Activated T-helper 1 cell treated with anti-CD3 and anti-CD28 coated beads, Interleukin-12 subunit alpha, Interleukin-12 subunit beta, Interleukin-2, Interleukin-4 antibody, amounts not matched to agents 30 ng/mL and 10 ng/mL and 1 ng/mL, durations not matched to agents 14 hours and 24 hours and 36 hours (primary cell): ENCODE measurements at regions of chr1 and their contacts with region 1.

Region 1: DNA sequence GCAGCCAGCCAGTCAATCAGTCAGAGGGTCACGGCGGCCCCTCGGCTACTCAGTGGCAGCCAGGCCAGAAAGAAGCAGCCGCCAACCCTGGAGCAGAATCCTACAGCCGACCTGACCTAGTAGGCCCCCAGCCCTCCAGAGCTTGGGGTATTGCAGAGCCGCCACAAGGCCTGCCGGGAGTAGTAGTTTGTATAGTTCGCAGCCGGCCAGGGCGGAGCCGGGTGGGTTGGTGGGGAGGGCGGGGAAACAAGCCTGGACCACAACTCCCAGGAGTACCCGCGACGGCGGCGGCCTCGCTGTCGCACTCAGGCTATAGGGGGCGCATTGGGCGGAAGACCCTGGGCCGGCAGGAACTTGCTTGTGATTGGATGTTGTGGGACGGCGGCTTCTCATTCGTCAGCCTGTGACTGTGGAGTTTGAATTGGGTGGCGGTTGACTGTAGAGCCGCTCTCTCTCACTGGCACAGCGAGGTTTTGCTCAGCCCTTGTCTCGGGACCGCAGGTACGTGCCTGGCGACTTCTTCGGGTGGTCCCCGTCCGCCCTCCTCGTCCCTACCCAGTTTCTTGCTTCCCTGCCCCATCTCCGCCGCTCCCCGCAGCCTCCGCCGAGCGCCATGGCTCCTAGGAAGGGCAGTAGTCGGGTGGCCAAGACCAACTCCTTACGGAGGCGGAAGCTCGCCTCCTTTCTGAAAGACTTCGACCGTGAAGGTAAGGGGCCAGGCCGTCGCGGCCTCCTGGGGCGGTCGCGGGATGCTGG is at the start of gene CDCA8:
- DNase-seq: peak; percentile 99
- H3K4me3 Mint-ChIP-seq: peak within 1 kb of the TSS; percentile 92
- H3K27ac Mint-ChIP-seq: peak within 1 kb of the TSS; percentile 91
- H3K4me1 Mint-ChIP-seq: peaks cover 50% of the 10 kb centered on the region
- H3K27me3 Mint-ChIP-seq: no peaks in the 10 kb centered on the region
- total RNA-seq, gene CDCA8: 33.5 and 37.2 TPM in 2 replicates

Region 2: DNA sequence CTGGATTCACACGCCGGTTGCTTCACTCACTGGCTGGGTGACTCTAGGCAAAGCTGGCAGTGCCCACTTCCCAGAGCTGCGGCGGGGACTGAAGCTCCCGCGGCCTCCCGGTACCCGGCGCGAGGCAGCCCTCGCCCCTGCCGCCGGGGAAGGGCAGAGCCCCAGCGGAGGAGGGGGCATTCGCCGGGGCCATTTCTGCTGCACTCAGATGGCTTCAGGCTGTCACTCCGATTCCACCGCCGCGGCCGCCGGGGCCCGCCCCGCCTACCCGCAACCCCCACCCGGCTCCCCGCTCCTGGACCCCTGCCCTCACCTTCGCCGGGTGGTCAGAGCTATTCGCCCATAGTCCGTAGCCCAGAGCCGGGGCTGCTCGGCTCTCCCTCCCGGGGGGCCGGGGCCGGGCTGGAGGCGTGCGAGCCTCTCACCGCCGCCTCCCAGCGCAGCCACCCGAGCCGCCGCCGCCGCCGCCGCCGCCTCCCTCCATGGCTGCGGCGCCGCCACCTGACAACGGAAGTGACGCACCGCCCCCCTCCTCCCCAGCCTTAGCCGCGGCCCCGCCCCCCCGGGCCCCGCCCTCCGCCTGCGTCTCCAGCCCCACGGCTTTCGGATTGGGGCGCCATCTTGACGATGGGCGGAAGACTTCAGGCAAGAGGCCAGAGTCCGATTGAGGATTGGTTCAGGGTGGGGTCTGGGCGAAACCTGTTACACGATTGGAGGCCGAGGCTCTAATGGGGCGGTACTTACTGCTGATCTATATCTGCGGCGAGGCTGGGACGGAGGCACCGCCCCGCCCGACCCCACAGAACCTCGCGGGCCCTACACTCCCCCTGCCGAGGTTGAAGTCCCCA is 1306.6 kb before region 1 on chr1 and contains the start of gene STK40:
- intact Hi-C with region 1: loop called (anchors 5 kb)
- DNase-seq: peak; percentile 95
- H3K4me3 Mint-ChIP-seq: peak within 1 kb of the TSS; percentile 96
- H3K27ac Mint-ChIP-seq: peak within 1 kb of the TSS; percentile 97
- H3K4me1 Mint-ChIP-seq: peaks cover 54% of the 10 kb centered on the region
- H3K27me3 Mint-ChIP-seq: no peaks in the 10 kb centered on the region
- total RNA-seq, gene STK40: 46.5 and 48.7 TPM in 2 replicates

Region 3: DNA sequence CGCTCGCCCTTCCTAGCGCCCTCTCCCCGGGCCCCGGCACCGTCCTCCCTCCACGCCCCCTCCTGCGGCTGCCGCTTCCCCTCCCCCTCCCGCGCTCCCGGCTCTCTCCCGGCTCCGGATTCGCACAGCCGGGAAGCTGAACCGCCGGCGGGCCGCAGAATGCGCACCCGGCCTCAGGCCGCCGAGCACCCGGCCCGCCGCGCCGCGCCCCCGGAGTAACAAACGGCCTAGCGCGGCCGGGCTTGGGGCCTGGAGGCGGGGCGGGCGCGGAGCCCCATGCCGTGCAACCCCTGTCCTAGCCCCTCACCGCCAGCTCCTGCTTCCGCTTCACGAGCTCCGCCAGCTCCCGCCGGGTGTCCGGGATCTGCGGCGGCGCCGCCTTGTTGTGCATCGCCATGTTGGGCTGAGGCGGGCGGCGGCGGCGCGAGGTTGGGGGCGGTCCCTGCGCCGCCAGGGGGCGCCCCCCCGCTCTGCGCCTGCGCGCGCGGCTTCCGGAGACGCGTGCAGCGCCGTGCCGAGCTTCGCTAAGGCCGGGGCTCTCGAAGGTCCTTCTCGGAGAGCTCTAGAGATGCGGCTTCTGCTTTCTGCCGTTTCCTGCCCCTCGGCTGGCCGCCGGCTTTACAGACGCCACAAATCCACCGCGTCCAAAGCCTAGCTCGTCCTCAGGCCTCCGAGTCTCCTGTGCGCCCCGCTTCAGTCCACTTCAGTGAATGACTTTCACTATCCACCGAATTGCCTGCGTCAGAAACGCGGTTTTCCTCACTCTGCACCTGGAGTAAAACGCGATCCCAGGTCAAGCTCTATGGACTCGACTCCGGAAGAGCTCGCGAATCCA is 177.7 kb before region 1 on chr1 and contains the start of gene MEAF6:
- intact Hi-C with region 1: loop called (anchors 1 kb)
- DNase-seq: peak; percentile 84
- H3K4me3 Mint-ChIP-seq: peak within 1 kb of the TSS; percentile 96
- H3K27ac Mint-ChIP-seq: peak within 1 kb of the TSS; percentile 96
- H3K4me1 Mint-ChIP-seq: peaks cover 45% of the 10 kb centered on the region
- H3K27me3 Mint-ChIP-seq: no peaks in the 10 kb centered on the region
- total RNA-seq, gene MEAF6: 102 and 103 TPM in 2 replicates

Region 4: GRCh38 chr1:37807555-37808368 is 115.5 kb after region 1 on chr1 and contains the starts of genes C1orf122 and YRDC:
- intact Hi-C with region 1: loop called (anchors 1 kb)
- DNase-seq: peak; percentile 91
- H3K4me3 Mint-ChIP-seq: peak within 1 kb of the TSS; percentile 95
- H3K27ac Mint-ChIP-seq: peak within 1 kb of the TSS; percentile 97
- H3K4me1 Mint-ChIP-seq: peaks cover 53% of the 10 kb centered on the region
- H3K27me3 Mint-ChIP-seq: no peaks in the 10 kb centered on the region
- total RNA-seq, gene C1orf122: 30.7 and 33.3 TPM in 2 replicates
- total RNA-seq, gene YRDC: 73.9 and 77.6 TPM in 2 replicates

Region 5: GRCh38 chr1:37828410-37829074 is 136.3 kb after region 1 on chr1:
- intact Hi-C with region 1: no loop called
- DNase-seq: no peak
- H3K4me3 Mint-ChIP-seq: no peak overlapping the region
- H3K27ac Mint-ChIP-seq: no peak overlapping the region
- H3K4me1 Mint-ChIP-seq: peaks cover 14% of the 10 kb centered on the region
- H3K27me3 Mint-ChIP-seq: no peaks in the 10 kb centered on the region

Region 6: DNA sequence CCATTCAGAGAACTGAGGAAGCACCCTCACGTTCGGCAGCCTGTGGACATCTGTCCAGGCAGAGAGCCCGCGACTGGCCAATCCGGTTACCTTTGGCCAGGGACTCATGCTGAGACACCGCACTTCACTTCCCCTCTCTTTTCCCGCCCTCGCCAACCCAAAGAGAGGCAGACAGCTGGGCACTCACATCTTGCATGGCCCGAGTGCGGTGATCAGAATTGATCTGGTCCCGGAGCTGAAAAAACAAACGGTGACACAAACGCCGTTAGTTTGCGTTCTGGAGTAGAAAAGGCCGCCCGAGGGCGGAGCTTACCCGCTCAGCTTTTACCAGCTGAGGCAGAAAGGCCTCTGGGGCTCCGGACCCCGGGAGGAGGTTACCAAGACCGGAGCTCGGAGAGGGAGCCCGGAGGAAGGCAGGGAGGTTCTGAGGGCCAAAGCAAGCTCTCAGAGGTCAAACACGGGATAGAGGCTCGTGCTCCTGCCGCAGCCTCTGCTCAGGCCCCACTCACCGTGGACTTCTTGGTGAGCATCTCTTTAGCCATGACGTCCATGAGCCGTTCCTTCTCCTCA is 297.2 kb after region 1 on chr1:
- intact Hi-C with region 1: loop called (anchors 1 kb)
- DNase-seq: peak; percentile 41
- H3K4me3 Mint-ChIP-seq: peak overlapping the region; percentile 96
- H3K27ac Mint-ChIP-seq: peak overlapping the region; percentile 94
- H3K4me1 Mint-ChIP-seq: peaks cover 17% of the 10 kb centered on the region
- H3K27me3 Mint-ChIP-seq: no peaks in the 10 kb centered on the region